ENCODE measurements at regions of chr11 and their contacts with region 1.

Region 1: DNA sequence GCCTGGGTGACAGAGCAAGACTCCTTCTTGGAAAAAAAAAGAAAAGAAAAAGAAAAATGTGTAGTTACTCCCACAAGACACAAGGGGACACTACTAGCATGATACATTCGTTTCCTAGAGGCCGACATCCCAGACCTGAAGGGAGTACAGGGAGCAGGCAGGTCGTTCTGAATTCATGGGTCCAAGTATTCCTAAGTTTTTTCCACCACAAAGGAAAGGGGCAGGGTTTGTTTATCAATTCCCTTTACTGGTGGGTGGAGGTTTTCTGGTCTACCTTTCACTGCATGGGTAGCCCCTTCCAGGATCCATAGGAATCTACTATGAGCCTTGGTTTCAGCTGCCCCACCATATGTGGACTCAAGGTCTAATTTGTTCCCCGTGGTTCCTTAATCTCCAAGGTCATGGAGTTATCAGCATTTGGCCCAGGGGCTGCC is 11.8 kb downstream of the TIGD3 start:
- DNase-seq: peak; percentile 86
- ATAC-seq: peak; percentile 63
- H3K4me3 ChIP-seq: no peak overlapping the region
- H3K27ac ChIP-seq: peak overlapping the region; percentile 6; the same call in 1 of the 2 replicates
- H3K4me1 ChIP-seq: peaks cover 8% of the 10 kb centered on the region
- H3K27me3 ChIP-seq: no peaks in the 10 kb centered on the region
- CTCF ChIP-seq: peak; percentile 75

Region 2: DNA sequence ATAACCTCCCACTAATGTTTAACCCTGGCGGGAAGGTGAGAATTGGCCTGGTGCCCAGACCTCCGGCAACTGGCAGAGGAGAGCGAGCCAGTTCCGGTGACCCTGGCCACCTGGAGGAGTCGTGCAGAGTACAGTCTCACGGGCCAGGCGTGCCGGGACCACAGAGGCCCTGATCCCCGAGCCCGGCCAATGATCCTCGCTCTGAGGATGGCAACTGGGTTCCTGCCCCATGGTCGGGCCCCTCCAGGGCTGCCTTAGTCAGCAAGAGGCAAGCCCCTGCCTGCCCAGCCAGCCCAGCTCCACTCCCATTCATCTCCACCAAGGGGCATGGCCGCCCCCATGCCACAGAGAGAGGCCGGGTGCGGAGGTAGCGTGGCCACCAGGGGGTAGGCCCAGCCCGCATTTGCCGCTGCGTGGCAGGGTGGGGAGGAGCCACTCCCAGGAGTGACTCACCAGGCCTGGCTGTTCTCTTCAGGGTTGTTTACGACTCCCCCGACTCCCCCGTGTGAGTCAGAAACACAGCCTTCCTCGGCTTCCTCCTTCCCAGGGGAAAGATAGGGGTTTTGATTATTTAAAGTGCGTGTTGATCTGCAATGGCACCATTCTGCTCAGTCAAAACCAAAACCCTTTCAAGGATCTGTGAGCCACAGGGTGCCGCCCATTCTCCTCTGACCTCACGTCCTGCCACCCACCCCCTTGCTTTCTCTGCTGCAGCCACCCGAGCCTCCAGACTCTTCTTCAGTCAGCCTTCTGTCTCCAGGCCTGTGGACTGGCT is 15.9 kb after region 1 on chr11 and contains the start of gene SLC25A45:
- CTCF ChIA-PET with region 1: interaction called, 5 read pairs
- POLR2A ChIA-PET with region 1: interaction called, 6 read pairs
- intact Hi-C with region 1: loop called (anchors 1 kb)
- DNase-seq: peak; percentile 99
- ATAC-seq: peak; percentile 78
- H3K4me3 ChIP-seq: peak within 1 kb of the TSS; percentile 55
- H3K27ac ChIP-seq: peak within 1 kb of the TSS; percentile 98
- H3K4me1 ChIP-seq: peaks cover 57% of the 10 kb centered on the region
- H3K27me3 ChIP-seq: no peaks in the 10 kb centered on the region
- CTCF ChIP-seq: peak; percentile 82
- total RNA-seq, gene SLC25A45: 12.7 and 13.1 TPM in 2 replicates

Measured in PC-3 (cell line).